Breast epithelium (tissue), 4 donors: ENCODE measurements at regions of chr4 and their contacts with region 1.

Region 1: GRCh38 chr4:154254999-154255398 is 236.6 kb downstream of the DCHS2 start:
- DNase-seq: no peak
- H3K4me3 ChIP-seq: no peak overlapping the region
- H3K27ac ChIP-seq: no peak overlapping the region
- H3K4me1 ChIP-seq: no peaks in the 10 kb centered on the region
- H3K27me3 ChIP-seq: no peaks in the 10 kb centered on the region
- CTCF ChIP-seq: no peak
- POLR2A ChIP-seq: no peak

Region 2: GRCh38 chr4:153844144-153844543 is 410.9 kb before region 1 on chr4:
- intact Hi-C with region 1: loop called (anchors 5 kb)
- DNase-seq: no peak
- H3K4me3 ChIP-seq: no peak overlapping the region
- H3K27ac ChIP-seq: no peak overlapping the region
- H3K4me1 ChIP-seq: no peaks in the 10 kb centered on the region
- H3K27me3 ChIP-seq: no peaks in the 10 kb centered on the region
- CTCF ChIP-seq: no peak
- POLR2A ChIP-seq: no peak

Region 3: GRCh38 chr4:154349829-154350228 is 94.8 kb after region 1 on chr4:
- intact Hi-C with region 1: no loop called
- DNase-seq: no peak
- H3K4me3 ChIP-seq: no peak overlapping the region
- H3K27ac ChIP-seq: no peak overlapping the region
- H3K4me1 ChIP-seq: no peaks in the 10 kb centered on the region
- H3K27me3 ChIP-seq: no peaks in the 10 kb centered on the region
- CTCF ChIP-seq: peak in 1 of 3 donors; percentile 22
- POLR2A ChIP-seq: no peak

Region 4: DNA sequence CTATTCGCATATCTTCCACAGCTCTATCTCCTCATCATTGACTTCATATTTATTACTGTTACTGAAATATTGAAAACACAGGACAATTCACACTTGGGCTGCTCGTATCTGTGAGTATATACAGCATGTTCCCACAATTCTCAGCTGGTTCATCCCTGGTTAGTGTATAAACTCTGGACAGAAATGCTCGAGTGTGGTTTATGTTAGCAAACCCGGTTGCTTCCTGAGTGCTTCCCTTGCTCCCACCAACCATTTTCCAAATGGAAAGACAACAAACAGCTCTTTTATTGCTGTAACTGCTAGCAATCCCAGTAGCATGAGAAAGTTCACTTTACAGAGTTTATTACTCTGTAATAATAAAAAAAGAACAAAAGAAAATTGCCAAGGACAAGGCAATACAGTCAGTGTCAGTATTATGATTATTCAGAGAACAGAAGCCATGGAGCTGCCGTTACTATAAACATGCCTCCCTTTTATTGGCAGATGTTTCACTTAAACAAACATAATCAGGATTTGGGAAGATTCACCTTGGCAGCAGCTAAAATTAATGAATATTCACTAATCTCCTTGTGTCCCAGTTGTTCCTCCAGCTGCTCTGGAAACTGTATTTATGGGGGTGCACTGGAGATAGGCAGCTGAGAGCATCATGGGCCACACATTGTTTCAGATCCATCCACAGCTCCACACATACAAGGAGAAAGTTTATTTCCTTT is 1277.5 kb after region 1 on chr4:
- intact Hi-C with region 1: no loop called
- DNase-seq: no peak
- H3K4me3 ChIP-seq: no peak overlapping the region
- H3K27ac ChIP-seq: peak overlapping the region in 1 of 2 donors; percentile 36
- H3K4me1 ChIP-seq: no peaks in the 10 kb centered on the region
- H3K27me3 ChIP-seq: no peaks in the 10 kb centered on the region
- CTCF ChIP-seq: no peak
- POLR2A ChIP-seq: no peak